ENCODE measurements at regions of chr17 and their contacts with region 1.

Region 1: GRCh38 chr17:49556223-49556971 is 19.3 kb upstream of the NXPH3 start:
- DNase-seq: peak; percentile 94
- ATAC-seq: peak; percentile 89
- H3K4me3 Mint-ChIP-seq: no peak overlapping the region
- H3K27ac Mint-ChIP-seq: no peak overlapping the region
- H3K4me1 Mint-ChIP-seq: peaks cover 13% of the 10 kb centered on the region
- H3K27me3 Mint-ChIP-seq: peaks cover 8% of the 10 kb centered on the region
- CTCF ChIP-seq: peak; percentile 96

Region 2: DNA sequence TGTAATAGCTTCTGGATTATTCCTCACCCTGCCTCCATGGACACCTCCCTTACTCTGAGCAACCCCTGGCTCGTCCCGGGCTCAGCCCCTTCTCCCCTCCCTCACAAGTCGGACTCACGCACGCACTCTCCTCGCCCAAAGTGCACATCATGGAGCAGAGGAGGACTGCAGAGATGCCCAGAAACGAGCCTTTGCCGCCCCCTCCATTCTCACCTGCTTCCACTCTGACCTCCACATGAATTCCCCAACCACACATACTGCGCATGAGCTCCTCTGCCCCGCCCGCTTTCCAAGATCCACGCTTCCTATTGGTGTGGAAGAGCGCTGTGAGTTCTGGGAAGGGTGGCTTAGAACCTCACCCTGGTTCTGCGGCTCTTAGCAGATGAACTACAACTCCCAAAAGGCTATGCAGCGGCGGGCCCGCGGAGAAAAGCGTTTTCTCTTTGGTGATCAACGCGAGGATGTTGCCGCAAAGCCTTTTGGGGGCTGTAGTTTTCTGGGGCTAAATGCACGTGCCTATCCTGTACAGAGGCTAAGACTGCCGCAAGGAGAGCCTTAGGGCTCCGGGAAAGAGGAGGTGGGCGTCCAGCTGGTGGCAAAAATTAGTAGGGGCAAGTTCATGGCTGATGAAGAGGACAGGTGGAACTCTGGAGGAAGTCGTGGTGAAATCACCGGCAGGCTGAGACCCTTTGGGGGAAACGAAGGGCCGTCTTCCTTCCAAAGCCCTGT is 141.6 kb before region 1 on chr17 and contains the start of gene PHB1:
- CTCF ChIA-PET with region 1: interaction called, 129 read pairs
- POLR2A ChIA-PET with region 1: interaction called, 4 read pairs
- DNase-seq: peak; percentile 96
- ATAC-seq: peak; percentile 99
- H3K4me3 Mint-ChIP-seq: peak within 1 kb of the TSS; percentile 100
- H3K27ac Mint-ChIP-seq: peak within 1 kb of the TSS; percentile 94
- H3K4me1 Mint-ChIP-seq: 0 out of 2 replicates have a peak, but pooled peaks cover 8% of the 10 kb centered on the region
- H3K27me3 Mint-ChIP-seq: peaks cover 8% of the 10 kb centered on the region; the same call in 1 of the 2 replicates
- CTCF ChIP-seq: no peak
- total RNA-seq, gene PHB1: 350 to 375 TPM (median 362 TPM) in 3 replicates

Region 3: GRCh38 chr17:49471089-49471683 is 85.2 kb before region 1 on chr17:
- CTCF ChIA-PET with region 1: interaction called, 30 read pairs
- POLR2A ChIA-PET with region 1: no interaction called
- DNase-seq: no peak
- ATAC-seq: peak; percentile 50
- H3K4me3 Mint-ChIP-seq: peak overlapping the region; percentile 66
- H3K27ac Mint-ChIP-seq: no peak overlapping the region
- H3K4me1 Mint-ChIP-seq: peaks cover 24% of the 10 kb centered on the region
- H3K27me3 Mint-ChIP-seq: peaks cover 60% of the 10 kb centered on the region
- CTCF ChIP-seq: no peak

Region 4: DNA sequence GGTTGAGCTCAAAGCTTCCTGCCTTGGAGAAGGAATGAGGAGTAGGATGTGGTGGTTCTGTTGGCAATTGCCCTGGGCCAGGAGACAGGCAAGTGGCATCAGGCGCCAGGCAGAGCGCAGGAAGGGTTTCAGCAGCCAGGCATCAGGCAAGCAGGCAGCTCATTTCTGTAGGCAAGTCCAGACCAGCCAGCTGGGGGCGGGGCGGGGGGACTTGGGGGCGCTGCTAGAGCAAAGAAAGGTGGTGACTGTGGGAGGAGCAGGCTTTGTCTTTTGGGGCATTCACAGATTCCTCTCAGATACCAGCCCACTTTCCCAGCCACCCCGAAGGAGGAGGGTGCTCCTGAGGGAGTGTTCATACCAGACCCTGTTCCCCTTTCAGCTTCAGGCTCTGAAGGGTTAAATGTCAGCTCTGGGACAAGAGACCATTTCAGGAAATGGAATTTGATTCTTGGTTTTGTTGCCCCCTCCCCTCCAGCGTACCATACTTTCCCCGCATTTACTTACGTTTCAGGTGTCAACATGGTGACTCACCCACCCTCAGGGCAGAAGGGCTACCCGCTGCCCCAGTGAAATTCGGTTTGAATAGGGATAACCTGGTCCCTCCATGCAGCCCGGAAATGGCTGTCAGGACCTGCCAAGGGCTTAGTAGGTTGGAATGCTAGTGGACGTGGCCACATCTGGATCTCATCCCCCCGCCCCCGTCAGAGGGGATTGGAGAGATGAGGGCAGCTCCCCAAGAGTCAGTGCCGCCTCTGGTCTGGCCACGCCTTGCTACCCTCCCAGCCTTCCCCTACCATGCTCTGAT is 48.1 kb before region 1 on chr17:
- CTCF ChIA-PET with region 1: interaction called, 115 read pairs
- POLR2A ChIA-PET with region 1: no interaction called
- DNase-seq: peak; percentile 78
- ATAC-seq: peak; percentile 73
- H3K4me3 Mint-ChIP-seq: peak overlapping the region; percentile 49
- H3K27ac Mint-ChIP-seq: peak overlapping the region; percentile 85
- H3K4me1 Mint-ChIP-seq: peaks cover 60% of the 10 kb centered on the region
- H3K27me3 Mint-ChIP-seq: peaks cover 7% of the 10 kb centered on the region; the same call in 1 of the 2 replicates
- CTCF ChIP-seq: no peak

Region 5: GRCh38 chr17:49646391-49647255 is 90.2 kb after region 1 on chr17:
- CTCF ChIA-PET with region 1: interaction called, 13 read pairs
- POLR2A ChIA-PET with region 1: no interaction called
- DNase-seq: no peak
- ATAC-seq: no peak
- H3K4me3 Mint-ChIP-seq: no peak overlapping the region
- H3K27ac Mint-ChIP-seq: peak overlapping the region; percentile 20; the same call in 1 of the 2 replicates
- H3K4me1 Mint-ChIP-seq: peaks cover 21% of the 10 kb centered on the region
- H3K27me3 Mint-ChIP-seq: no peaks in the 10 kb centered on the region
- CTCF ChIP-seq: no peak

Region 6: DNA sequence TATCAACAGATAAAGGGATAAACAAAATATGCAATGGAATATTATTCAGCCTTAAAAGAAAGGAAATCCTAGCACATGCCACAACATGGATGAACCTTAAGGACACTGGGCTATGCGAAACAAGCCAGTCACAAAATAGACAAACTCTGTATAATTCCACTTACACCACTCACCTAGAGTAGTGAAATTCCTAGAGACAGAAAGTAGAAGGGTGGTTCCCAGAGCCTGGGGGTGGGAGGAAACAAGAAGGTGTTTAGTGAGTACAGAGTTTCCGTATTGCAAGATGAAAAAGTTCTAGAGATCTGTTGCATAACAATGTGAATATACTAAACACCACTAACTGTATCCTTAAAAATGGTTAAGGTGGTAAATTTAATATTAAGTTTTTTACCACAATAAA is 111.5 kb after region 1 on chr17:
- CTCF ChIA-PET with region 1: no interaction called
- POLR2A ChIA-PET with region 1: no interaction called
- DNase-seq: no peak
- ATAC-seq: no peak
- H3K4me3 Mint-ChIP-seq: no peak overlapping the region
- H3K27ac Mint-ChIP-seq: no peak overlapping the region
- H3K4me1 Mint-ChIP-seq: peaks cover 2% of the 10 kb centered on the region
- H3K27me3 Mint-ChIP-seq: no peaks in the 10 kb centered on the region
- CTCF ChIP-seq: no peak

Region 7: GRCh38 chr17:49715717-49716279 is 159.4 kb after region 1 on chr17:
- CTCF ChIA-PET with region 1: no interaction called
- POLR2A ChIA-PET with region 1: no interaction called
- DNase-seq: no peak
- ATAC-seq: no peak
- H3K4me3 Mint-ChIP-seq: no peak overlapping the region
- H3K27ac Mint-ChIP-seq: no peak overlapping the region
- H3K4me1 Mint-ChIP-seq: no peaks in the 10 kb centered on the region
- H3K27me3 Mint-ChIP-seq: no peaks in the 10 kb centered on the region
- CTCF ChIP-seq: no peak

Region 8: GRCh38 chr17:49779739-49780231 is 223.4 kb after region 1 on chr17:
- CTCF ChIA-PET with region 1: no interaction called
- POLR2A ChIA-PET with region 1: no interaction called
- DNase-seq: no peak
- ATAC-seq: peak; percentile 52; the same call in 1 of the 2 replicates
- H3K4me3 Mint-ChIP-seq: no peak overlapping the region
- H3K27ac Mint-ChIP-seq: no peak overlapping the region
- H3K4me1 Mint-ChIP-seq: no peaks in the 10 kb centered on the region
- H3K27me3 Mint-ChIP-seq: peaks cover 8% of the 10 kb centered on the region
- CTCF ChIP-seq: no peak

Measured in WTC11 (cell line).